Esophagus muscularis mucosa (tissue), 4 donors: ENCODE measurements at regions of chr12 and their contacts with region 1.

Region 1: DNA sequence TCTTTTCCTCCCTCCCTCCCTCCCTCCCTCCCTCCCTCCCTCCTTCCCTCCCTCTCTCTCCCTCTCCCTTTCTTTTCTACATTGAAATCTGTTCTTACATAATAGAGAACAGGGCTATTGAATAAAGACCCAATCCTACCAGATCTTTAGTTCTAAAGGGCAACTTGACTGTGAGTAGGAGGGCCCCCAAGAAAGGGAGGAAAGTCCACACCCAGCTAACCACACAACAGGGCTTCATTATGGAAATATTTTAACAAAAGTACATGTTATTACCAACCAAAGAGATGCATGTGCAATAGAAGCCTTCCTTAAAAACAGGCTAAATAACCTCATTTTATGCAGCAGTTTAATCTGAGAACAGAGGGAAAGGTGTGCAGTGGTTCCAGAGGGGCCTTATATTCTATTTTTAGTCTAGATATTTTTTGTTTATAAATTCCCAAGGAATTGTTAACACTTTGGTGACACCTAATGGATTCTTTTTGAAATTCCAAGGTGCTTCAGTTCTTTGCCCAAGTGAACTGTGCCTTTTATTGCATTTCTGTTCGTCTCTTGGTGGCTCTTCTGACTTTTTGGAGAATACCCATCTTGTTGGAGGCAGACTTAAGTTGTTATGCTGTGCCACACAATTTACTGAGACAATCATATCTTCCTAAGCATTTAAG is 63.0 kb downstream of the GNS start:
- DNase-seq: no peak
- H3K4me3 ChIP-seq: no peak overlapping the region
- H3K27ac ChIP-seq: peak overlapping the region; percentile 22 to 44 (median 40)
- H3K4me1 ChIP-seq: peaks cover 16 to 51% (median 40%) of the 10 kb centered on the region in 4 donors
- H3K27me3 ChIP-seq: no peaks in the 10 kb centered on the region
- CTCF ChIP-seq: peak; percentile 45 to 59 (median 48)
- EP300 ChIP-seq: no peak
- POLR2A ChIP-seq: no peak

Region 2: GRCh38 chr12:64451687-64452558 is 244.3 kb before region 1 on chr12 and contains the start of gene TBK1:
- intact Hi-C with region 1: loop called (anchors 5 kb)
- DNase-seq: peak; percentile 97
- H3K4me3 ChIP-seq: peak within 1 kb of the TSS; percentile 89 to 98 (median 94)
- H3K27ac ChIP-seq: peak within 1 kb of the TSS; percentile 93 to 99 (median 98)
- H3K4me1 ChIP-seq: peaks cover 13 to 40% (median 35%) of the 10 kb centered on the region in 4 donors
- H3K27me3 ChIP-seq: no peaks in the 10 kb centered on the region
- CTCF ChIP-seq: peak in 1 of 3 experiments; percentile 23
- EP300 ChIP-seq: no peak
- POLR2A ChIP-seq: peak; percentile 14
- total RNA-seq, gene TBK1: 21.2 to 24.1 (median 22.6) TPM

Region 3: GRCh38 chr12:64551698-64552097 is 144.5 kb before region 1 on chr12:
- intact Hi-C with region 1: loop called (anchors 2 kb)
- DNase-seq: no peak
- H3K4me3 ChIP-seq: no peak overlapping the region
- H3K27ac ChIP-seq: no peak overlapping the region
- H3K4me1 ChIP-seq: peaks cover 7 to 9% (median 8%) of the 10 kb centered on the region in 4 donors
- H3K27me3 ChIP-seq: no peaks in the 10 kb centered on the region
- CTCF ChIP-seq: no peak
- EP300 ChIP-seq: no peak
- POLR2A ChIP-seq: no peak

Region 4: GRCh38 chr12:64610149-64610678 is 86.0 kb before region 1 on chr12 and contains the start of gene RASSF3:
- intact Hi-C with region 1: loop called (anchors 2 kb)
- DNase-seq: no peak
- H3K4me3 ChIP-seq: peak within 1 kb of the TSS; percentile 71 to 99 (median 88)
- H3K27ac ChIP-seq: peak within 1 kb of the TSS; percentile 90 to 94 (median 93)
- H3K4me1 ChIP-seq: peaks cover 13 to 50% (median 43%) of the 10 kb centered on the region in 4 donors
- H3K27me3 ChIP-seq: no peaks in the 10 kb centered on the region
- CTCF ChIP-seq: no peak
- EP300 ChIP-seq: no peak
- POLR2A ChIP-seq: peak; percentile 6
- total RNA-seq, gene RASSF3: 124 to 299 (median 229) TPM

Region 5: DNA sequence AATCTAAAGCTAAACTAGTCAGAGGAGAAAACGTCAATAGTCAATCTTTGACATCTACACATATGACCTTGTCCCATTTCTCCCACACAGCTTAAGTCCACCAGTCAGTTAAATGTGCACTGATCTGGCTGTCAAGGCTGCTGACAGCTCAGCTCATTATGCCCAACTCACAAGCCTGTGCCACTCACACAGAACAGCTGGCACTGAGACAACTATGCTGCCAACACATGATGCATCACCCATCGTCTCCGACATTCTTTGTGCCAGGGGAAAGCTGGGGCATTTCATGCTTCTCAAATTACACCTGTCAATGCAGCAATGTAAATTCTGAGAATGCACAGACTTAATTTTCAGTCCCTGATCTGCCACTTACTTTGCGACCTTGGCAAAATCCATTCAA is 37.6 kb after region 1 on chr12:
- intact Hi-C with region 1: no loop called
- DNase-seq: no peak
- H3K4me3 ChIP-seq: no peak overlapping the region
- H3K27ac ChIP-seq: no peak overlapping the region
- H3K4me1 ChIP-seq: peaks cover 0 to 6% (median 3%) of the 10 kb centered on the region in 4 donors
- H3K27me3 ChIP-seq: no peaks in the 10 kb centered on the region
- CTCF ChIP-seq: no peak
- EP300 ChIP-seq: no peak
- POLR2A ChIP-seq: no peak

Region 6: DNA sequence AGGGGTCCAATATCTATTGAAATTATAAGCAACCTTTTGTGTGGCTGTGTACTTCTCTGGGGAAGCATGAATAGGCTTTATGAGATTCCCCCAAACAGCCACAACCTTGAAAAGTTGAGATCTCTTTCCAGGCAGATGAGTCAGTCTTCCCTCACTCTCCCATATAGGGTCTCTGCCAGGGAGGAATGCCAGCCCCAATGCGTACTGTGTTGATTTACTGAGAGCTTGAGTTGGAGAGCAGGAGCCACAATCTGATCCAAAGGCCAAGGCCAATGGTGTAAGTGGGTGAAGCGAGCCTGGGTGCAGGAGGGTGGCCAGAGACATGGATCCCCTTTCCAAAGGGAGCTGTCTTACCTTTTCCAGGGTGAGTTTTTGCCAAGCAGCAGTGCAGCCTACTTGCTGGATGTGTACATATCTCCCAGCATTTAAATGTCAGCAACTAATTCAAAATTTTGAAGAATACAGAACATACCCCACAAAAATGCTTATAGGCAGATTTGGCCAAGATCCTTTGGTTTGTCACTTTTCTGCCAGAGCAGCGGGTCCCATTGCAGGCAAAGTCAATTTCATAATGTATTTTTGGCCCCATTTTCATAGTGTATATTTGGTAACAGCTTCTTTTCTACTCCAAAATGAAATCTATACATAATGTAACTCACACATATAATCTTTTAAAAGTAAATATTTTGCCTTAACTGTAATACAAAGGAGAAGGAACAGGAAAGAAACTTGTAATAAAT is 216.5 kb after region 1 on chr12:
- intact Hi-C with region 1: no loop called
- DNase-seq: no peak
- H3K4me3 ChIP-seq: no peak overlapping the region
- H3K27ac ChIP-seq: no peak overlapping the region
- H3K4me1 ChIP-seq: peaks cover 0 to 18% (median 6%) of the 10 kb centered on the region in 4 donors
- H3K27me3 ChIP-seq: no peaks in the 10 kb centered on the region
- CTCF ChIP-seq: no peak
- EP300 ChIP-seq: no peak
- POLR2A ChIP-seq: no peak